Dorsolateral prefrontal cortex (tissue), 120 donors: ENCODE measurements at regions of chr20 and their contacts with region 1.

Region 1: DNA sequence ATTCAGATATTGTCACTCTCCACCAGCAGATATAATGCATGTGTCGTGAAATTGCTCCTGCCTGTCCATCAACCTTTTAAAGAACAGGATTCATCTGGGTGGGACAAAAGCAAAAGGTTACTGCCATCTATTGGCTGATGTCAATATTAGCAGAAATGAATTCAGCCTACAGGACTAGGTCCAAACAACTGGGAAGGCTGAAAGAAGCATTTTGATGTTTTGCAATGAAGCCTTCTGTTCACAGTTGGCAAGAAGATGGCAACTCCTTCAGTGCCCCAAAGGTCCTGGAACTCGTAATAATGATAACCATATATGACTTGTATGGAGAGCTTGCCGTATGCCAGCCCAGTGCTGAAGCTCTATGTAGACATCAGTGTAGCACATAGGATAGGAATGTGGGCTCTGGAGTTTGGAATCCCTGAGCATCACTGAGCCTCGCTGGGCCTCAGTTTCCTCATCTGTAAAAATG is 7.5 kb downstream of the BCAS1 start:
- DNase-seq: no peak
- H3K4me3 ChIP-seq: no peak overlapping the region
- H3K27ac ChIP-seq: peak overlapping the region in 1 of 59 donors; percentile 36
- H3K27me3 ChIP-seq: peaks cover 0 to 4% (median 0%) of the 10 kb centered on the region in 45 donors
- CTCF ChIP-seq: peak; percentile 29 to 86 (median 75)

Region 2: DNA sequence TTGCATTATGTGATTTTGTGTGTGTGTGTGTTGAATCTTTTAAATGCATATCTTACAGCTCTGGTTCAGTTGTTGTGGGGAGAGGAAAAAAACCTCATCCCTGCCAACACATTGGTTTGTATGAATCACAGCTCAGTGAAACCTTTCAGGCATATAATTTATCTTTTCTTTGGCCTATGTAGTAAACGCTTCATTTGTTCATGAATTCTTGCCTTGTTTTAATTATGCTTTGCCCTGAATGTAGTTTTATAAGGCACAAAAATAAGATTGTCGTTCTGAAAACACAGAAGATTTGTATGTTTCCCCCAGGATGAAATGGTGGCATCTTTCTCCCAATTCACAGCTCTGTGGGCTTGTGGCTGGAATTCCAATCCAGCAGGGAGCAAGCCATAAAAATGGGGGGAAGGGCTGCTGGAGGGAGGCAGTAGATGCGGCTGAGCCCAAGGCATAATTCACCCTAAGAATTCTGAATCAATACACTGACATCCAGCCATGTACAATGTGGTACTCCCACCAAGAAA is 37.5 kb before region 1 on chr20:
- intact Hi-C with region 1: loop called in 1 of 2 experiments (anchors 5 kb)
- DNase-seq: no peak
- H3K4me3 ChIP-seq: peak overlapping the region in 53 of 59 donors; percentile 2 to 80 (median 58)
- H3K27ac ChIP-seq: peak overlapping the region in 48 of 59 donors; percentile 1 to 98 (median 92)
- H3K27me3 ChIP-seq: no peaks in the 10 kb centered on the region
- CTCF ChIP-seq: no peak